AG04450 (cell line): ENCODE measurements at regions of chr17 and their contacts with region 1.

Region 1: DNA sequence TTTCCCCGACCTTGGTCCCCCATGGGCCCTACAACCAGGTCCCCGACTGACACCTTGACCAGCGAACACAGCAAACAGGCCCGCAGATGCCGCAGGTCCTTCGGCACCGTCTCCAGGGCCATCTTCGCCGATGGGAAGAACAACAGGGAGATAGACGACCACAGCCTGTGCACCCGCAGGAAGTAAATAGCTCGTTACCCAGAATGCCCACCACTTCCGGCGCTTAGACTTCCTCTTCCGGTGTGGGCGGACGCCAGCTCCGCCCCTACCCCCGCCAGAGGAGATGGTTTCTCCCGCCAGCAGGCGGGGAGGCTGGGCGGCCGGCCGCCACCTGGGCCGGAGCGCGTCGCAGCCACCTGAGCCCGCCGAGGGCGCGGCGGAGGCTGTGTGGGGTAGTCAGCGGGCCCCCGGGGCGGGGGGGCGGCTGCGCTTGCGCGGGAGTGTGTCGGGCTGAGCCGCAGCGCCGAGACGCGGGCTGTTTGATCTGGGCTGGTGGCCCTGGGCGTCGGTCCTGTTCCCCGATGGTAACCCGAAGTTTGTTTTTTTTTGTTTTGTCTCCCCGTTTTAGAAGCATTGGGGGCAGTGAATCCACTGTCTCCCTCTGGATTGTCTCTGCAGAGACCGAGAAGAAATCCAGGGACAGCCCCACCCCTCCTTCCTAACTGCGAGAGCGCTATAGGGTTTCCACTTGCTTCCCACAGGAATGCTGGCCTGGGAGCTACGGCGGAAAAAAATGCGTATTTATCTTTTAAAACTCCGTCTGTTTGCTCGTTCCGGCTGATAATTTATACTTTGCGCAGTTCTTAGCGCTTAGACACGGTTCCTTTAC is at the start of gene SUPT4H1:
- DNase-seq: peak; percentile 85
- H3K4me3 ChIP-seq: peak within 1 kb of the TSS; percentile 98
- H3K27ac ChIP-seq: peak within 1 kb of the TSS; percentile 87
- H3K27me3 ChIP-seq: peaks cover 4% of the 10 kb centered on the region
- CTCF ChIP-seq: no peak
- polyA plus RNA-seq, gene SUPT4H1: 178 and 191 TPM in 2 replicates

Region 2: DNA sequence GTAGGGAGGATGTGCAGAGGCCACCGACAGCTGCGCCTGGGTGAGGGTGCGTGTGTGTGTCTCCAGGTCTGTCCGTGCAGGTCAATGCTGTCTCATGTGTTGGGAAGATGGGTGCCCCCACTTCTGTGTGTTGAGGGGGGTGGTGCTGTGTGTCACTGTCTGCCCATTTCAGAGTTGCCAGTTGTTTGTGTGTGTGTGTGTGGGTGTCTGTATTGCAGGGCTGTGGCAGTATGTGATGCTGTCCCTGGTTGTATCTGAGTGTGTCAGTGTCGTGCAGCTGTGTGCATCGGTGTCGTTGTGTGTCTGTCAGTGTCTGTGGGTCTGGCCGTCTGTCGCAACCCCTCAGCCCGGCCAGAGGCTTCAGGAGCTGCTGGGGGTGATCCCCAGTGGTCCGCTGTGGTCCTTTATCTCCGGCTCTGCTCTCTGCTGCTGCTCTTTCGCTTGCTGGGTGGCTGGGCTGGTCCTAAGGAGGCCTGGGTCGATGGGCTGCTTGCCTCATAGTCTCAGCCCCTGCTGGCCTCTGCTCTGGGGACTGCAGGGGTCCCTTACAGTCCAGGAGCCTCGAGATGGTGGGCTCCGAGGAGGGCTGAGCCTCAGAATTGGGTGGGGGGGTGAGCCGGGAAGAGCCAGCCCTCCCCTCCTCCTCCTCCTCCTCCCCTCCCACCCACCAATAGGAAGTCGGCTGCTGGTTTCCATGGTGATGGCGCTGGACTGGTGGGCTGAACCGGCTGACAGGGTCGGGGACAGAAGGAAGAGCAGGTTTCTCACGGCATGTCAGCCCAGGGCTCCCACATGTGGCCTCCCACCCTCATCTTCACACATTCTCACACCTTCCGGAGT is 23.8 kb before region 1 on chr17 and contains the start of gene TSPOAP1:
- CTCF ChIA-PET with region 1: interaction called, 3 read pairs
- POLR2A ChIA-PET with region 1: interaction called, 17 read pairs
- DNase-seq: no peak
- H3K4me3 ChIP-seq: no peak within 1 kb of the TSS
- H3K27ac ChIP-seq: no peak within 1 kb of the TSS
- H3K27me3 ChIP-seq: peaks cover 1% of the 10 kb centered on the region
- CTCF ChIP-seq: no peak
- polyA plus RNA-seq, gene TSPOAP1: 1.5 and 1.7 TPM in 2 replicates

Region 3: GRCh38 chr17:58337600-58338453 is 14.4 kb before region 1 on chr17:
- CTCF ChIA-PET with region 1: no interaction called
- POLR2A ChIA-PET with region 1: interaction called, 68 read pairs
- DNase-seq: peak; percentile 88
- H3K4me3 ChIP-seq: no peak overlapping the region
- H3K27ac ChIP-seq: peak overlapping the region; percentile 100
- H3K27me3 ChIP-seq: no peaks in the 10 kb centered on the region
- CTCF ChIP-seq: no peak

Region 4: DNA sequence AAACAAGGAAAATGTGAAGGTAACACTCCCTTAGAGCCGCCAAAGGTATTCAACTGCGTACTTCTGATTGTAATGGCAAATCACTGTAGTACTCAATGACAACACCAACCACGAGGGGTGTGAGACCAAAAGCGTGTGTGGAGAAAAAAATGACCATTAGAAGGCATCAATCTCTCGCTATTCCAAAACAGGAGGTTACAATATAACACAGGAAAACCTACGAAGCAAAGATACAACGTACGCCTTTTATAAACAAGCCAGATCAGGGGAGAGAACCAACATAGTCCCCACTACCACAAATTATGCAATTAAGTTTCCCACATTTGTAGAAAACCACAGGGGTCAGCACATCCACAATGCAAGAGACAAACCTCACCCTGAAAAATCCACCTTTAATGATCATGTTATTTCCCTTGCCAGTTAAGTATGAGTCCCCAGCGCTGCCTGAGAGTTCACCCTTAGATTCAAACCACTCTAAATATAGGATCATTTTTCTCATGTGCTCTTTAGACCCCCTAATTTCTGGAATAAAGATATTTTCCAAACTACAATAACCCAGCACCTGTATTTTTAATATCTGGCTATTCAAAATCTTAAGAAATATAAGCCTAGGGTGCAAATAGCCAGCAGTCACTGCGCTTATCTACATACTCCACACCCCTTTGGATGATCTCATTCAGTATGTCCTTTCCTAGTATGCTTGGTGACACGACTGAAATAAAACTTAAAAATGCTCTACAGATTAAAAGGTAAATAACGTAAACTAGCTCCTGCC is 327.2 kb after region 1 on chr17:
- CTCF ChIA-PET with region 1: no interaction called
- POLR2A ChIA-PET with region 1: no interaction called
- DNase-seq: no peak
- H3K4me3 ChIP-seq: no peak overlapping the region
- H3K27ac ChIP-seq: no peak overlapping the region
- H3K27me3 ChIP-seq: no peaks in the 10 kb centered on the region
- CTCF ChIP-seq: no peak